Heart left ventricle (tissue), 16 donors: ENCODE measurements at regions of chr17 and their contacts with region 1.

Region 1: GRCh38 chr17:45135192-45135977 is at the start of gene ACBD4:
- DNase-seq: peak; percentile 95 to 97 (median 96)
- ATAC-seq: peak; percentile 79 to 89 (median 84)
- H3K4me3 ChIP-seq: peak within 1 kb of the TSS; percentile 56 to 92 (median 68)
- H3K27ac ChIP-seq: peak within 1 kb of the TSS in 11 of 12 donors; percentile 66 to 91 (median 78)
- H3K4me1 ChIP-seq: peaks cover 0 to 40% (median 28%) of the 10 kb centered on the region in 12 donors
- H3K27me3 ChIP-seq: no peaks in the 10 kb centered on the region
- CTCF ChIP-seq: peak in 11 of 12 donors; percentile 99 to 100 (median 100)
- POLR2A ChIP-seq: peak in 1 of 2 donors; percentile 81
- total RNA-seq, gene ACBD4: 4.1 to 9.8 (median 6.3) TPM

Region 2: GRCh38 chr17:44919885-44920564 is 215.4 kb before region 1 on chr17:
- intact Hi-C with region 1: loop called in 5 of 10 experiments (anchors 1 to 5 kb)
- DNase-seq: peak; percentile 79 to 88 (median 84)
- ATAC-seq: peak; percentile 69 to 85 (median 84)
- H3K4me3 ChIP-seq: no peak overlapping the region
- H3K27ac ChIP-seq: peak overlapping the region in 5 of 12 donors; percentile 17 to 74 (median 70)
- H3K4me1 ChIP-seq: peaks cover 0 to 38% (median 16%) of the 10 kb centered on the region in 12 donors
- H3K27me3 ChIP-seq: peaks cover 0 to 4% (median 0%) of the 10 kb centered on the region in 9 donors
- CTCF ChIP-seq: peak; percentile 70 to 90 (median 84)
- POLR2A ChIP-seq: no peak

Region 3: DNA sequence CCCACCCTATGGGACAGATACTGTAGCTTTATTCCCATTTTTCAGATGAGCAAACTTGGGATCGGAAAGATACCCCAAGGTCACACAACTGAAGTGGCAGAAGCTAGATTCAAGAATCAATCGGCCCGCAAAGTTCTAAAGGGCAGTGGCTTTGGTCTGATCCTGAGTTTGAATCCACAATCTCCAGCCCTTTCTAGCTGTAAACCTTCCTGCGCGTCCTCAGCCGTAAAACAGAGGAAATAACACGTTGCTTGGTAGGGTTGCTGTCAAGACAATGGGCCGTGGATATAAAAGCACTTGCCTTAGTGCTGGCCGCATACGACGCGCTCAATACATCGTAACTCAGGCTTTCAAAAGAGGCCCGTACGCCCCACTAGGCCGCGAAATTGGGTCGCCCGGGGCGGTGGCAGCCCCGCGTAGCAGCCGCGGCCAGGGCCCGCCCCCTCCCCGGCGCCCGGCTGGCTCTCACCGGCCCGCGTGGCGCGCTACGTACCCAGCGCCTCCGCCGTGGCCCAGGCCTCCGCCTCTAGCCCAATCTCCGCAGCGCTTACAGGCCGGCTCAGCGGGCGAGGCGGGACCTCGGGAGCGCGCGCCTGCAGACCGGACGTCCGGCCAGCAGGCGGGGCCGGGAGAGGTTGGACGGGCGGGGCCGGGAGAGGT is 84.2 kb before region 1 on chr17 and contains the start of gene DCAKD:
- intact Hi-C with region 1: loop called in 1 of 10 experiments (anchors 10 kb)
- DNase-seq: peak; percentile 94 to 97 (median 96)
- ATAC-seq: peak; percentile 98 to 100 (median 99)
- H3K4me3 ChIP-seq: peak within 1 kb of the TSS; percentile 58 to 89 (median 70)
- H3K27ac ChIP-seq: peak within 1 kb of the TSS; percentile 89 to 97 (median 92)
- H3K4me1 ChIP-seq: peaks cover 0 to 27% (median 13%) of the 10 kb centered on the region in 12 donors
- H3K27me3 ChIP-seq: no peaks in the 10 kb centered on the region
- CTCF ChIP-seq: peak in 1 of 12 donors; percentile 7
- POLR2A ChIP-seq: peak in 1 of 2 donors; percentile 88
- total RNA-seq, gene DCAKD: 24.7 to 60.9 (median 33.9) TPM

Region 4: GRCh38 chr17:45098869-45099616 is 36.3 kb before region 1 on chr17:
- intact Hi-C with region 1: loop called in 9 of 10 experiments (anchors 2 to 5 kb)
- DNase-seq: peak; percentile 82 to 93 (median 84)
- ATAC-seq: peak; percentile 55 to 83 (median 75)
- H3K4me3 ChIP-seq: no peak overlapping the region
- H3K27ac ChIP-seq: peak overlapping the region in 5 of 12 donors; percentile 29 to 72 (median 42)
- H3K4me1 ChIP-seq: peaks cover 0 to 48% (median 19%) of the 10 kb centered on the region in 12 donors
- H3K27me3 ChIP-seq: no peaks in the 10 kb centered on the region
- CTCF ChIP-seq: peak; percentile 85 to 96 (median 90)
- POLR2A ChIP-seq: no peak

Region 5: GRCh38 chr17:45121055-45121454 is 14.3 kb before region 1 on chr17:
- intact Hi-C with region 1: no loop called
- DNase-seq: no peak
- ATAC-seq: no peak
- H3K4me3 ChIP-seq: no peak overlapping the region
- H3K27ac ChIP-seq: no peak overlapping the region
- H3K4me1 ChIP-seq: peaks cover 5 to 32% (median 19%) of the 10 kb centered on the region in 12 donors
- H3K27me3 ChIP-seq: no peaks in the 10 kb centered on the region
- CTCF ChIP-seq: no peak
- POLR2A ChIP-seq: no peak

Region 6: DNA sequence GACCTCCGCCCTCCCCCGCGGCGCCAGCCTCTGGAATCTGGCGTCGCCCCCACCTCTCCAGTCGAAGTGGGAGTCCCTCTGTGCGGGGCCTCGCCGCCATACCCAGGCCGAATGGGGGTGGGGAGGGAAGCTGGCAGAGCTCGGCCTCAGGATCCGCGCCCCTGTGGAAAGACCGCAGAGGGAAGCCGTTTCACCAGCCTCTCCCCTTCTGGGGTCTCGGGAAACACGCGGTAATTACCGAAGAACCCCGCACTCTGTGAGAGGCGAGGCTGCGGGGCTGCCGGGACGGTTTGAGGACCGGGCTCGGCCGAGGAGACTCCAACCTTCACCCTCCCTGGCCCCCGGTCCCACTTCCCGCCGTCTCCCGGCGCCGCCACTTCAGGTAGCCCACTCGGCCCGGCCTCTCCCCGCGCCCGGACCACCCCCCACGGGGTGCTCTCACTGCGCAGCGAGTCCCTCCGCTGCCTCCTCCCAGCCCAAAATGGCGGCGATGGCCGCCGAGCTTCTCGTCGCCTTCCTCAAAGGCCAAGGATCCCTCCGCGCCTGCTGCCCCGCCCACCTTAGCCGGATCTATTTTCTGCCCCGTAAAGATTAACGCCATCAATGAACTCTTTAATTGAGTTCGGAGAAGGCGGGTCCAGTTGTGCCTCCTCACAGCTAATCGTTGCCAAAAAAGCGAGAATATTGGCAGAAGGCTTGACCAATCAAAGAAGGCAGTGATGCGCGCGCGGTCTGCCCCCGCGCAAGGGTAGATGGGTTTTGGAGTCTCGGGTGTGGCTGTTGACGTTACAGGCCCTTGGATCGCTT is 25.8 kb after region 1 on chr17:
- intact Hi-C with region 1: loop called in 1 of 10 experiments (anchors 1 kb)
- DNase-seq: peak; percentile 97 to 99 (median 98)
- ATAC-seq: peak; percentile 96 to 98 (median 97)
- H3K4me3 ChIP-seq: peak overlapping the region; percentile 65 to 98 (median 93)
- H3K27ac ChIP-seq: peak overlapping the region; percentile 96 to 100 (median 100)
- H3K4me1 ChIP-seq: peaks cover 6 to 50% (median 36%) of the 10 kb centered on the region in 12 donors
- H3K27me3 ChIP-seq: no peaks in the 10 kb centered on the region
- CTCF ChIP-seq: peak in 3 of 12 donors; percentile 8 to 21 (median 17)
- POLR2A ChIP-seq: peak in 1 of 2 donors; percentile 81

Region 7: DNA sequence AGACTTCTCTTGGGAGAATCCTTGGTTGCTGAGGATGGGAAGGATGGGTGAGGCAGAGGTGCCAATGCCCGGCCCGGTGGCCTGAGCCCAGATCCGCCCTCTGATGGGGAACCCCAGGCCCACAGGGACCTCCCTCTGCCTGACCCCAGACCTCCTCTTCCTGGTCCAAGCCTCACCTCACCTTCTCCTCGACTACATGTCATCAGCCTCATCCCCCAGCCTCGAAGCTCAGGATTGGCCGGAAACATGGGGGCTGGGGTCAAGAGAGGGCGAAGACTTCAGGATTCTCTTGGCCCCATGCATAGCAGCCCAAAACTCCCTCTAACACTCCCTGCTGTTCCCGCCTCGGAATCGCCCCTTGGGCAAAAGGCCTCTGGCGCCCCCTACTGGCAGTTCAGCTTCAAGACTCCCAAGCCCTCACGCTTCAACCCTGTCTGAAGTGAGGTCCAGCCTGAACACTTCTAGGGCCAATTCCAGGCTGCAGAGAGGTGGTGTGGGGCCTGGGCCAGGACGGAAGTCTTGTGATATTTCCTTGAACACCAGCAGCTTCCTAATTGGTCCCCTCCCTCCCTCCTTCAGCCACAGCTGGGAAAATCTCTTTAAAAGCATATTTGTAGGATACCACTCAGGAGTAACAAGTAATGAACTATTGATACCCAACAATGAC is 250.1 kb after region 1 on chr17:
- intact Hi-C with region 1: loop called in 2 of 10 experiments (anchors 5 to 10 kb)
- DNase-seq: peak; percentile 88 to 94 (median 89)
- ATAC-seq: peak; percentile 86 to 95 (median 90)
- H3K4me3 ChIP-seq: no peak overlapping the region
- H3K27ac ChIP-seq: peak overlapping the region in 1 of 12 donors; percentile 63
- H3K4me1 ChIP-seq: peaks cover 0 to 31% (median 14%) of the 10 kb centered on the region in 12 donors
- H3K27me3 ChIP-seq: peaks cover 0 to 3% (median 0%) of the 10 kb centered on the region in 9 donors
- CTCF ChIP-seq: peak; percentile 91 to 100 (median 98)
- POLR2A ChIP-seq: no peak